Aorta (tissue), 5 donors: ENCODE measurements at regions of chr3 and their contacts with region 1.

Region 1: GRCh38 chr3:131794766-131795388 is 239.9 kb downstream of the CPNE4 start:
- DNase-seq: no peak
- ATAC-seq: peak; percentile 76
- H3K4me3 ChIP-seq: no peak overlapping the region
- H3K27ac ChIP-seq: no peak overlapping the region
- H3K4me1 ChIP-seq: peaks cover 0 to 6% of the 10 kb centered on the region in 2 donors
- H3K27me3 ChIP-seq: no peaks in the 10 kb centered on the region

Region 2: DNA sequence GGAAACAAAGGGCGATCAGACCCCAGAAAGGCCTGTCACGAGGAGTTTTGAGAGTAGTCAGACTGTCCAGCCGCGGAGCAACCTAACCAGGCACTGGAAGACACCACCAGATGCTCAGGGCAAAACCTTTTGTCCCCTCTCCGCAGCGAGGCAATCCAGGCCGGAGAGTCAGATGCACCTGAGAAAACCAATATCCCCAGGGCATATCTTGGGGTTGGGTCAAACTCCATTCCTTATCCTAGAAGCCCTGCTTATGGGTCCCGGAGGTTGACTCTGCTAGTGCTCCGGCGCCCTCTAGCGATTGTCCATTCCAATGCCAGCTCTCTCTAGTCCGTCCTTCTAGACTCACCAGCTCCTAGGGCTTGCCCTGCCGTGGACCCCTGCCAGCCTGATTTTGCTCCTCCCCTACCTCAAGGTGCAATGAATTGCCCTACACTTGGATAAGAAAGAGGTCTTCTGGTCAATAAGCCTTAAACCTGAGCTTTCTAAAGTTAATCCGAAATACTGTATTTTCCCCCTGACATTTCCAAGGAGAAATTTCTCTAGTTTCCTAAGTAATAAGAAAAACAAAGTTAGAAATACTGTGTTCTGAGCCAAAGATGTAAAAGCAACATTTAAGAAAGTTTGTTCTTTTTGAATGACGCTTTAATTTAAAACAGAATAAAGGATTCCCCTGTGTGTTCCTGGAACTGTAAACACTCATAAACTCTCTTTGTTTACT is 234.5 kb after region 1 on chr3:
- intact Hi-C with region 1: loop called (anchors 1 kb)
- DNase-seq: peak; percentile 85 to 93
- ATAC-seq: peak; percentile 80
- H3K4me3 ChIP-seq: no peak overlapping the region
- H3K27ac ChIP-seq: no peak overlapping the region
- H3K4me1 ChIP-seq: no peaks in the 10 kb centered on the region
- H3K27me3 ChIP-seq: no peaks in the 10 kb centered on the region

Region 3: DNA sequence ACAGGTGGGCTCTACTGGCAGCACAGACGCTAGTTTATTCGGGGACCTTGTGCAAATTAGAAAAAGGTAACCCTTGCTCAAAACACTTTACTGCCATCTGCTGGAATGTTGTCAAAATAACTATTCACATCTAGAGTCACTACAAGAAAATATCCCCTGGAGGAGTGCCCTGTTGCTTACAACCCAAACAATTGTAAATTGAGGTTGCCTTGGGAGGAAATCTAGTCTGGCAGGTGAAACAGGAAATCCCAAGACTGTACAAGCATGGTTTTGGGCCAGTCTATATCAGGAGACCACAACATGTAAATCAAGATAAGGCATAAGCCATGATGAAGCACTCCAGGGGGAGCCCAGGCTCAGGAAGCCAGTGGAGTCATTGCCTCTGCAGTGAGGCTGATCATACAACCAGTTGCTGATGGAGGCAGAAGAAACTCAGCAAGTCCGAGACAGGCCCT is 385.5 kb after region 1 on chr3:
- intact Hi-C with region 1: loop called (anchors 2 to 5 kb)
- DNase-seq: no peak
- ATAC-seq: no peak
- H3K4me3 ChIP-seq: no peak overlapping the region
- H3K27ac ChIP-seq: no peak overlapping the region
- H3K4me1 ChIP-seq: no peaks in the 10 kb centered on the region
- H3K27me3 ChIP-seq: no peaks in the 10 kb centered on the region